Calu3 (cell line): ENCODE measurements at regions of chr9 and their contacts with region 1.

Region 1: DNA sequence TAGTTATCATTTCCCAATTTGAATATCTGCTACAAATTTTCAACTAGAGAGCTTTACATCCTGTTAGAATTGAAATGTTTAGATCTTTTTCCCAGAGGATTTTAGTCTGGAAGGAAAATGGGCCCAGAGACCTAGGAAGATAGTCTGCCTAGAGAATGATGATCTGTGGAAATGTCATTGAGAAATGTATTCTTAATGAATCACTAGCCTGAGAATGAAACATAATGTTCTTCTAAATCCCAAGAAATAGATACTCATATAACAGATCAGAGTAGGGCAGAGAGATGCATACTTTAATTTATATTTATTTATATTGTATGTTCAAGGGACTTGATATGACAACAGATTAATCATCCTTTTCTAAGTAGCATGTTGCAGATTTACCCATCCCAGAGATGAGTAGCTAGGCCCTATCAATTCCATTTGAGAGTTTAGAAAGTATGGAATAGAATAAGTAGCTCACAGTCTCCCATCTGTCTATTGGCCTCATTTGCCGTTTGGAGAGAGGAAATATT is 25.1 kb upstream of the SLC44A1 start:
- DNase-seq: no peak
- H3K4me3 Mint-ChIP-seq: no peak overlapping the region
- H3K27ac Mint-ChIP-seq: no peak overlapping the region
- H3K4me1 Mint-ChIP-seq: peaks cover 6% of the 10 kb centered on the region
- H3K27me3 Mint-ChIP-seq: no peaks in the 10 kb centered on the region
- CTCF ChIP-seq: no peak

Region 2: GRCh38 chr9:104429031-104429546 is 790.3 kb before region 1 on chr9:
- CTCF ChIA-PET with region 1: no interaction called
- intact Hi-C with region 1: no loop called
- DNase-seq: no peak
- H3K4me3 Mint-ChIP-seq: no peak overlapping the region
- H3K27ac Mint-ChIP-seq: no peak overlapping the region
- H3K4me1 Mint-ChIP-seq: no peaks in the 10 kb centered on the region
- H3K27me3 Mint-ChIP-seq: no peaks in the 10 kb centered on the region
- CTCF ChIP-seq: no peak

Region 3: GRCh38 chr9:105198865-105199264 is 20.5 kb before region 1 on chr9:
- CTCF ChIA-PET with region 1: no interaction called
- intact Hi-C with region 1: loop called (anchors 2 kb)
- DNase-seq: no peak
- H3K4me3 Mint-ChIP-seq: no peak overlapping the region
- H3K27ac Mint-ChIP-seq: no peak overlapping the region
- H3K4me1 Mint-ChIP-seq: no peaks in the 10 kb centered on the region
- H3K27me3 Mint-ChIP-seq: no peaks in the 10 kb centered on the region
- CTCF ChIP-seq: no peak